ENCODE measurements at regions of chr17 and their contacts with region 1.

Region 1: GRCh38 chr17:63592797-63593472 is 7.8 kb upstream of the TACO1 start:
- DNase-seq: no peak
- ATAC-seq: no peak
- H3K4me3 ChIP-seq: no peak overlapping the region
- H3K27ac ChIP-seq: no peak overlapping the region
- H3K4me1 ChIP-seq: peaks cover 0 to 5% of the 10 kb centered on the region in 2 experiments; a peak in 2 of 5 replicates
- H3K27me3 ChIP-seq: no peaks in the 10 kb centered on the region
- CTCF ChIP-seq: no peak
- EP300 ChIP-seq: no peak
- POLR2A ChIP-seq: no peak
- RAD21 ChIP-seq: no peak

Region 2: GRCh38 chr17:63571763-63572271 is 21.1 kb before region 1 on chr17:
- CTCF ChIA-PET with region 1: no interaction called
- POLR2A ChIA-PET with region 1: interaction called, 11 read pairs
- in situ Hi-C with region 1: no loop called
- intact Hi-C with region 1: no loop called
- DNase-seq: peak; percentile 46 to 67 (median 57)
- ATAC-seq: peak; percentile 89
- H3K4me3 ChIP-seq: no peak overlapping the region
- H3K27ac ChIP-seq: peak overlapping the region; percentile 3; the same call in 1 of the 3 replicates
- H3K4me1 ChIP-seq: peaks cover 5% of the 10 kb centered on the region in 2 experiments; a peak in 2 of 5 replicates
- H3K27me3 ChIP-seq: no peaks in the 10 kb centered on the region
- CTCF ChIP-seq: no peak
- EP300 ChIP-seq: no peak
- POLR2A ChIP-seq: no peak
- RAD21 ChIP-seq: no peak

Region 3: DNA sequence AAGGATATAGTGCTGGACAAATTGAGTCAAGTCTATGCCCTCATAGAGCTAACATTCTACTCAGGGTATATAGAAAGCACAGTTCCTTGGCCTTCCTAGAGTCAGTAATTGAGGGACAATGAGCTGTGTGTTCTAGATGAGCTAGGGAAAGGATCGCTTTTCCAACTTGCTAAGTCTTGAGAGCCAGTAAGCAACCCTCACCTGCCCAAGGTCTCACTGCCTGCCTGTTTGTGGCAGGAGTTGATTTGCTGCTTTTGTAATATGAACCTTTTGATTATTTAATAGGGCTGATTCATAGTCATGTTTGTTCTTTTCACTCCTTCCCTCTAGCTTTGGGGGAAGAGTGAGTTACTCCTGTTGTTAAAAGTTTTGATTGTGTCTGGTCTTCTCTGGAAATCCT is 187.6 kb after region 1 on chr17:
- CTCF ChIA-PET with region 1: no interaction called
- POLR2A ChIA-PET with region 1: no interaction called
- in situ Hi-C with region 1: no loop called
- intact Hi-C with region 1: no loop called
- DNase-seq: no peak
- ATAC-seq: no peak
- H3K4me3 ChIP-seq: no peak overlapping the region
- H3K27ac ChIP-seq: no peak overlapping the region
- H3K4me1 ChIP-seq: peaks cover 0 to 9% of the 10 kb centered on the region in 2 experiments; a peak in 2 of 5 replicates
- H3K27me3 ChIP-seq: no peaks in the 10 kb centered on the region
- CTCF ChIP-seq: no peak
- EP300 ChIP-seq: no peak
- POLR2A ChIP-seq: no peak
- RAD21 ChIP-seq: no peak